GM13976 (cell line): ENCODE measurements at regions of chr14 and their contacts with region 1.

Region 1: GRCh38 chr14:99884834-99885648 is 91.8 kb downstream of the EML1 start:
- DNase-seq: peak; percentile 68
- CTCF ChIP-seq: peak; percentile 52

Region 2: DNA sequence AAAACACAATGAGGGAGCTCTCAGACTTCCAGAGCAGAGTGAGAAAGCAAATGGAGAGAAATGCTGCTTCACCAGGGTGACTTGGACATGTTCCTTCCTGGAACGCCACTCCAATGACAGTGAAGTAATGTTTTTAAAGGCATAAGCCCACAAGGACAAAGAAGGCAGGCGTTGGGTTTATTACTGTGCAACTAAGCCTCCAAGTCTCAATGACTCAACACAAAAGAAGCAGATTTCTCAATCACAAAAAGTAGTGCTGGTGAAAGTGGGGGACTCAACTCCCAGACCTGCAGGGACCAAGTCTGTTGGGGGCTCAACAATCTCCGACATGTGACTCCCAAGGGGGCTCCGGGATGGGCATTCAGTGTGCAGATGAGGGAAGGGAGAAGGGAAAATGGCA is 1118.2 kb before region 1 on chr14:
- in situ Hi-C with region 1: no loop called
- DNase-seq: no peak
- CTCF ChIP-seq: no peak

Region 3: GRCh38 chr14:99524804-99525698 is 360.0 kb before region 1 on chr14:
- in situ Hi-C with region 1: loop called (anchors 10 kb)
- DNase-seq: no peak
- CTCF ChIP-seq: no peak

Region 4: DNA sequence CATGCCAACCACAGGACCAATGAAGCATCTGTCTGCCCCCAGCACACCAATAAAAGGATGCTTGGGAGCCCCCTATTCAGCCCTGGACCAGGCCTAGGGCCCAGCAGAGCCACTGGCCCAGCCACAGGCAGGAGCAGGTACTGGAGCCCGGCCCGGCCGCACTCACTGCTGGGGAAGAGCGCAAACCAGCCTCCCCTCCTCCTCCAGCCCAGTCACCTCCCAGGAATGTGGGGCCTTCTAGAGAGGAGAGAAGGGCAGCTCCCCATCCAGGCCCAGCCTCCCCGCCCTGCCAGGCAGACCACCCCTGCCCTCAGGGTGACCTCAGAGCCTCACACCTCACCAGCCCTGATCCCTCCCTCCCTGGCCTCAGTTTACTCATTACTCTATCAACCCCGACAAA is 347.6 kb before region 1 on chr14:
- in situ Hi-C with region 1: no loop called
- DNase-seq: no peak
- CTCF ChIP-seq: no peak

Region 5: DNA sequence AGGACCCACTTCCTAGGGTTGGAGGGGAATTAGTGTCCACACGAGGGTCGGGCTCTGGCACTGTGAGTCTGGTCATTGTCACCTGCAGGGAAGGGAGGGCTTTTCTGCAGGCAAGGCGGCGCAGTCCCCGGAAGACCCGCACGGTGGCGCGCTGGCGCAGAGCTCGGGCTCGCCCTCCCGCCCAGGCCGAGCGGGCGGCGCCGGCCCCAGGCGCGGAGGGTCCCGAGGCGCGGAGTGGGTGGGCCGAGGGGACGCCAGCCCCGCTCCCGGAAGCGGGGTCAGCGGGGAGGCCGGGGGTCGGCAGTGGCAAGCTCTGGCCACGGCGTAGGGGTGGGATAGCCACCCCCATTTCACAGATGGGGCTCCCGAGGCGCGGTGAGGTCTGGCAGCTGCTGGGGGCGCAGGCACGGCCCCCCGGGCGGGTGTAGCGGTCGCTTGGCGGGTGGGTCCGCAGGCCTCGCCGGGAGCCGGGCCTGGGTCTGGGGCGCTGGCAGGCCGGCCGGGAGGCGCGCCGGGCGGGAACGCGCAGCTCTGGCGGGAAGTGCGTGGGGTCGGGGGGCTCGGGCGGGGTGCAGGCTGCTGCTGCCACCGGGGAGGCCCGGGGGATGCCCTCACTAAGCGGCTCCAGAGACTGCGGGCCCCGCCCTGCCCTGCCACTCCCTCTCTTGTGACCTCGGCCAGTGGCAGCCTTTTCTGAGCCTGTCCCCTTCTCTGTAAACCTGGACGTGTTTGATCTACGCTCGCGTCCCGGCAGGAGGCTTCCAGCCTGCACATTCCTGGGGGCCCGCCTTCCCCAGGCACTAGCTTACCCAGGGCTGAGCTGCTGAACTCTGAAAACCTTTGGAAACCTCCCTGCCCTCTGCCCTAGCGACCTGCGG is 154.8 kb before region 1 on chr14:
- in situ Hi-C with region 1: loop called (anchors 10 kb)
- DNase-seq: peak; percentile 91
- CTCF ChIP-seq: peak; percentile 87